ENCODE measurements at regions of chr6 and their contacts with region 1.

Region 1: GRCh38 chr6:7112741-7113313 is 5.1 kb downstream of the RREB1 start:
- DNase-seq: peak; percentile 43
- H3K4me3 Mint-ChIP-seq: peak overlapping the region; percentile 77
- H3K27ac Mint-ChIP-seq: peak overlapping the region; percentile 77
- H3K4me1 Mint-ChIP-seq: peaks cover 28% of the 10 kb centered on the region
- H3K27me3 Mint-ChIP-seq: no peaks in the 10 kb centered on the region
- CTCF ChIP-seq: no peak

Region 2: DNA sequence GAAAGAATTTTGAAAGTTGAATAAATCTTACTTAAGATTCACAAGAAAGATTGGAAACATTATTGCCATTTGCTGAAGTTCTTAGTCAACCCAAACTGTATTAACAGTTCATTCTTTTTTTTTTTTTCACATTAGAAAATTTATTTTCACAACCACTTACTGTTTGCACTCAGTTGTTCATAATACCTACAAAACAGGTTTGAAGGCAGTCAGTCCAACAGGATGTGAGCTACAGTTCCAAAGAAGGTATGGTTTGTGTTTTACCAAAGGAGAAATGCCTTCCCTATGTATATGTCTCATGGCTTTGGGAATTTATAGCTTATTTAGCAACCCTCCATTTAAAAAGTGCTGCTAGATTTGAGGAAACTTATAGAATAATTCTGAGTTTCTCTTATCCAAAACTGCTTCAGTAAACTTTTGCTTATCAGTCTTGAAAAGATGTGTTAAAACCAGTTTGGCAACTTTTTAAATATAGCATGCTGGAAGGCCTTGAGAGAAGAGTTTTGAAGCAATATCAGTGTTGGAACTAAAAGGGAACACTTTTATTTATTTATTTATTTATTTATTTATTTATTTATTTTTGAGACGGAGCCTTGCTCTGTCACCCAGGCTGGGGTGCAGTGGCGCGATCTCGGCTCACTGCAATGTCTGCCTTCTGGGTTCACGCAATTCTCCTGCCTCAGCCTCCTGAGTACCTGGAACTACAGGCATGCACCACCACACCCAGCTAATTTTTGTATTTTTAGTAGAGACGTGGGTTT is 51.9 kb before region 1 on chr6:
- CTCF ChIA-PET with region 1: no interaction called
- intact Hi-C with region 1: loop called (anchors 5 kb)
- DNase-seq: no peak
- H3K4me3 Mint-ChIP-seq: no peak overlapping the region
- H3K27ac Mint-ChIP-seq: no peak overlapping the region
- H3K4me1 Mint-ChIP-seq: peaks cover 28% of the 10 kb centered on the region
- H3K27me3 Mint-ChIP-seq: no peaks in the 10 kb centered on the region
- CTCF ChIP-seq: no peak

Region 3: GRCh38 chr6:7647504-7647903 is 534.7 kb after region 1 on chr6:
- CTCF ChIA-PET with region 1: no interaction called
- intact Hi-C with region 1: no loop called
- DNase-seq: no peak
- H3K4me3 Mint-ChIP-seq: no peak overlapping the region
- H3K27ac Mint-ChIP-seq: no peak overlapping the region
- H3K4me1 Mint-ChIP-seq: no peaks in the 10 kb centered on the region
- H3K27me3 Mint-ChIP-seq: peaks cover 11% of the 10 kb centered on the region
- CTCF ChIP-seq: no peak